Heart left ventricle (tissue), 16 donors: ENCODE measurements at regions of chr2 and their contacts with region 1.

Region 1: DNA sequence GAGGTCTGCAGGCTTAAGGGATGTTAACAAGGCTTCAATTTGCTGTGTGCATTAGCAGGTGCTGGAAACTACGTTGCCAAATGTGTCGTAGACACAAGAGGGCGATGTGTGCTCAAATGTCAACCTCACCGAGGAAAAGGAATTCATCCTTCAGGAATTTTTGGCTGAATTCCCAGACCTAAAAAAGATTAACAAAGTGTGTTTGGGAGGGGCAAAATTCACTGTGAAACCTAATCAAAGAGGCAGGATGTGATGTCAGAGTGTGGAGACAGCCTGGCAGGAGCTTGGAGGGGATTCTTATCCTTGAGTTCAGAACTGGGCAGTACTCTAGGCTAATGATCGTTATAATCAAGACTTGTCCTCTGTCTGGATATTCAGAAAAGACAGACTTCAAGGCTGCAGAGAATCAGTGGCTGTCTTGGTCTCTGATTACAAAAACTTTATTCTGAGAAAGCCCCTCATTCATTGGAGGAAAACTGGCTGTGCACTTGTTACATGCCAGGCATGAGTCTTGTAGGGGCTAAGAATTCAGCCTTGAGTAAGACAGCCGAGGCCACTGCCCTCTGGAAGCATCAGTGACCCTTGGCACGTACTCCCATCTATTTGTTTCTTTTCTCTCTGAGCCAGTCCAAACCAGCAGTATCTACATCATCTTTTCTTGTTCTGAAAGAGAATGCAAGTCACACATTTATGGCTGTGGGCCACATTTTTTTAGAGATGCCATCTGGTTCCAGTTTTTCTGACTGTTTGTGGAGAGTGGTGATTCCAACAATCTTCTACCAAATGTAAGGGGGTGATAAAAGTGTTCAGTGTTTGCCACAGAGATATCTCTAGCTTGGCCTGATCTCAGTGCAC is 18.7 kb upstream of the SCYGR1 start:
- DNase-seq: peak in 4 of 5 donors; percentile 66 to 72 (median 68)
- ATAC-seq: peak; percentile 79 to 91 (median 88)
- H3K4me3 ChIP-seq: no peak overlapping the region
- H3K27ac ChIP-seq: peak overlapping the region; percentile 9 to 87 (median 64)
- H3K4me1 ChIP-seq: peaks cover 0 to 39% (median 12%) of the 10 kb centered on the region in 12 donors
- H3K27me3 ChIP-seq: no peaks in the 10 kb centered on the region
- CTCF ChIP-seq: peak; percentile 48 to 84 (median 73)
- POLR2A ChIP-seq: no peak

Region 2: DNA sequence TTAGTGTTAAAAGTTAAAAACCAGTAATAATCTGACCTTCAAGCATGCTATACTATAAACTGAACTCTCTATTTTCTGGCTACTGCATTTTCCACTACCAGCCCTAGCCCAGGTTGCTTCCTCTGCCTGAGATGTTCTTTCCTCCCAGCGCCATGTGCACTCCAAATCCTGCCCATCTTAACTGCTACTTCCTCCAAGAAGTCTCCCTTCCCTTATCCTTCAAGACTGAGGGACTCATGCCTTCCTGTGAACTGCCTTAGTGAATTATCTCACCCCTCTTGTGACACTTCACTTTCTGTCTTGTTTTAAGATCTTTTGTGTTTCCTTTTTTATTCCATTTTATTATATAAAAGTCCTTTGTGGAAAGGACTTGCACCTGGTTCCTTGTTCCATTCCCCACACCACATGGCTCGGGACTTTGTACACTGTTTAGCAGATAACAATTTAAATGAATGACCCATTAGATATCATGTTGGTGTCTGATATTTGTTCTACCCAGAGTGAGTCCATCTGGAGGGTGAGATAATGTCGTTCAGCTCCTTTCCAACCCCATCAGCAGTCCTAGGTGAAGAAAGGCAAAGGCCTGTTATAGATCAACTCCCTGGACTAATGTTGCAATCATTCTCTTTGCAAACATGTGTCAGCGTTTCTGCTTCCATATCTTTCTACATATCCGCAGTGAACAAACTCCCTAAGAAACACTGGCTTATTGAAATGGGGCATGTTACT is 44.7 kb after region 1 on chr2:
- intact Hi-C with region 1: loop called in 1 of 10 experiments (anchors 5 kb)
- DNase-seq: no peak
- ATAC-seq: peak; percentile 85 to 97 (median 92)
- H3K4me3 ChIP-seq: no peak overlapping the region
- H3K27ac ChIP-seq: peak overlapping the region in 9 of 12 donors; percentile 9 to 85 (median 35)
- H3K4me1 ChIP-seq: peaks cover 0 to 37% (median 3%) of the 10 kb centered on the region in 12 donors
- H3K27me3 ChIP-seq: no peaks in the 10 kb centered on the region
- CTCF ChIP-seq: no peak
- POLR2A ChIP-seq: no peak

Region 3: GRCh38 chr2:227655454-227655853 is 249.1 kb after region 1 on chr2:
- intact Hi-C with region 1: loop called in 2 of 10 experiments (anchors 5 kb)
- DNase-seq: no peak
- ATAC-seq: peak in 3 of 4 donors; percentile 67 to 91 (median 85)
- H3K4me3 ChIP-seq: no peak overlapping the region
- H3K27ac ChIP-seq: peak overlapping the region in 2 of 12 donors; percentile 20 to 49
- H3K4me1 ChIP-seq: peaks cover 0 to 6% (median 0%) of the 10 kb centered on the region in 12 donors
- H3K27me3 ChIP-seq: no peaks in the 10 kb centered on the region
- CTCF ChIP-seq: no peak
- POLR2A ChIP-seq: no peak

Region 4: DNA sequence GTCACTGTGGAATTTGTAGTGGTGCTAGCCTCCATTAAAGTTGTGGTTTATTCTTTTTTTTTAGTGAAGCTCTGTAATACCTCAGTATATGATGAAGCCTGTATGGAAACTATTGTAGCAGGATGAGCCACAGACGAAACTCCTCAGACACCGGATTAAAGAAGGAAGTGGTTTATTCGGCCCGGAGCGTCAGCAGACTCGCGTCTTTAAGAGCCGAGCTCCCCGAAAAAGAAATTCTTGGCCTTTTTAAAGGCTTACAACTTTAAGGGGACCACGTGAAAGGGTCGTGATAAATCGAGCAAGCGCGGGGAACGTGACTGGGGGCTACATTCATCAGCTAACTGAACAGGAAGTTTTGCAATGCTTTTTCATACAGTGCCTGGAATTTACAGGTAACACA is 399.2 kb after region 1 on chr2:
- intact Hi-C with region 1: no loop called
- DNase-seq: no peak
- ATAC-seq: no peak
- H3K4me3 ChIP-seq: no peak overlapping the region
- H3K27ac ChIP-seq: no peak overlapping the region
- H3K4me1 ChIP-seq: peaks cover 0 to 4% (median 0%) of the 10 kb centered on the region in 12 donors
- H3K27me3 ChIP-seq: no peaks in the 10 kb centered on the region
- CTCF ChIP-seq: no peak
- POLR2A ChIP-seq: no peak

Region 5: GRCh38 chr2:227862227-227862740 is 455.9 kb after region 1 on chr2:
- intact Hi-C with region 1: loop called in 1 of 10 experiments (anchors 10 kb)
- DNase-seq: no peak
- ATAC-seq: no peak
- H3K4me3 ChIP-seq: no peak overlapping the region
- H3K27ac ChIP-seq: no peak overlapping the region
- H3K4me1 ChIP-seq: peaks cover 0 to 22% (median 0%) of the 10 kb centered on the region in 12 donors
- H3K27me3 ChIP-seq: peaks cover 0 to 3% (median 0%) of the 10 kb centered on the region in 9 donors
- CTCF ChIP-seq: peak in 11 of 12 donors; percentile 30 to 70 (median 54)
- POLR2A ChIP-seq: no peak

Region 6: GRCh38 chr2:227884511-227884947 is 478.1 kb after region 1 on chr2:
- intact Hi-C with region 1: loop called in 1 of 10 experiments (anchors 10 kb)
- DNase-seq: peak; percentile 30 to 77 (median 48)
- ATAC-seq: peak in 3 of 4 donors; percentile 66 to 80 (median 70)
- H3K4me3 ChIP-seq: no peak overlapping the region
- H3K27ac ChIP-seq: no peak overlapping the region
- H3K4me1 ChIP-seq: no peaks in the 10 kb centered on the region
- H3K27me3 ChIP-seq: no peaks in the 10 kb centered on the region
- CTCF ChIP-seq: peak; percentile 44 to 72 (median 62)
- POLR2A ChIP-seq: no peak